CD4-positive, alpha-beta memory T cell (primary cell): ENCODE measurements at regions of chr15 and their contacts with region 1.

Region 1: GRCh38 chr15:70097337-70098169 is at the start of gene TLE3:
- DNase-seq: peak; percentile 98
- H3K4me3 ChIP-seq: peak within 1 kb of the TSS; percentile 52 to 88
- H3K4me3 Mint-ChIP-seq: peak within 1 kb of the TSS; percentile 95 to 100 (median 98)
- H3K27ac ChIP-seq: peak within 1 kb of the TSS; percentile 88
- H3K27ac Mint-ChIP-seq: peak within 1 kb of the TSS; percentile 98 to 100 (median 99)
- H3K4me1 ChIP-seq: peaks cover 54% of the 10 kb centered on the region
- H3K4me1 Mint-ChIP-seq: peaks cover 32 to 70% (median 45%) of the 10 kb centered on the region in 4 donors
- H3K27me3 ChIP-seq: no peaks in the 10 kb centered on the region
- H3K27me3 Mint-ChIP-seq: peaks cover 2 to 9% of the 10 kb centered on the region in 2 donors
- total RNA-seq, gene TLE3: 118 to 121 TPM

Region 2: GRCh38 chr15:69468241-69469121 is 629.1 kb before region 1 on chr15:
- CTCF ChIA-PET with region 1: no interaction called
- POLR2A ChIA-PET with region 1: interaction called, 36 read pairs
- intact Hi-C with region 1: loop called (anchors 1 kb)
- DNase-seq: peak; percentile 90 to 98 (median 94)
- H3K4me3 ChIP-seq: peak overlapping the region in 1 of 2 donors; percentile 34
- H3K4me3 Mint-ChIP-seq: peak overlapping the region; percentile 50 to 87 (median 78)
- H3K27ac ChIP-seq: peak overlapping the region; percentile 90
- H3K27ac Mint-ChIP-seq: peak overlapping the region; percentile 97 to 100 (median 100)
- H3K4me1 ChIP-seq: peaks cover 41% of the 10 kb centered on the region
- H3K4me1 Mint-ChIP-seq: peaks cover 22 to 50% (median 29%) of the 10 kb centered on the region in 4 donors
- H3K27me3 ChIP-seq: no peaks in the 10 kb centered on the region
- H3K27me3 Mint-ChIP-seq: no peaks in the 10 kb centered on the region

Region 3: GRCh38 chr15:69719527-69720240 is 377.9 kb before region 1 on chr15:
- CTCF ChIA-PET with region 1: interaction called, 8 read pairs
- POLR2A ChIA-PET with region 1: interaction called, 144 read pairs
- intact Hi-C with region 1: loop called (anchors 2 kb)
- DNase-seq: peak; percentile 68 to 89 (median 78)
- H3K4me3 ChIP-seq: no peak overlapping the region
- H3K4me3 Mint-ChIP-seq: peak overlapping the region in 7 of 8 donors; percentile 18 to 94 (median 51)
- H3K27ac ChIP-seq: peak overlapping the region; percentile 39
- H3K27ac Mint-ChIP-seq: peak overlapping the region; percentile 93 to 97 (median 95)
- H3K4me1 ChIP-seq: peaks cover 96% of the 10 kb centered on the region
- H3K4me1 Mint-ChIP-seq: peaks cover 62 to 92% (median 81%) of the 10 kb centered on the region in 4 donors
- H3K27me3 ChIP-seq: no peaks in the 10 kb centered on the region
- H3K27me3 Mint-ChIP-seq: peaks cover 0 to 1% of the 10 kb centered on the region in 2 donors

Region 4: GRCh38 chr15:69760890-69761568 is 336.5 kb before region 1 on chr15:
- CTCF ChIA-PET with region 1: interaction called, 26 read pairs
- POLR2A ChIA-PET with region 1: interaction called, 285 read pairs
- intact Hi-C with region 1: loop called (anchors 1 kb)
- DNase-seq: peak; percentile 83 to 94 (median 86)
- H3K4me3 ChIP-seq: no peak overlapping the region
- H3K4me3 Mint-ChIP-seq: peak overlapping the region; percentile 37 to 72 (median 60)
- H3K27ac ChIP-seq: no peak overlapping the region
- H3K27ac Mint-ChIP-seq: peak overlapping the region; percentile 35 to 97 (median 90)
- H3K4me1 ChIP-seq: peaks cover 69% of the 10 kb centered on the region
- H3K4me1 Mint-ChIP-seq: peaks cover 56 to 69% (median 65%) of the 10 kb centered on the region in 4 donors
- H3K27me3 ChIP-seq: no peaks in the 10 kb centered on the region
- H3K27me3 Mint-ChIP-seq: peaks cover 0 to 2% of the 10 kb centered on the region in 2 donors

Region 5: GRCh38 chr15:70299931-70300869 is 202.6 kb after region 1 on chr15:
- CTCF ChIA-PET with region 1: no interaction called
- POLR2A ChIA-PET with region 1: interaction called, 14 read pairs
- intact Hi-C with region 1: no loop called
- DNase-seq: peak; percentile 60 to 88 (median 64)
- H3K4me3 ChIP-seq: no peak overlapping the region
- H3K4me3 Mint-ChIP-seq: peak overlapping the region in 7 of 8 donors; percentile 32 to 70 (median 64)
- H3K27ac ChIP-seq: no peak overlapping the region
- H3K27ac Mint-ChIP-seq: peak overlapping the region; percentile 61 to 90 (median 83)
- H3K4me1 ChIP-seq: peaks cover 32% of the 10 kb centered on the region
- H3K4me1 Mint-ChIP-seq: peaks cover 9 to 19% (median 16%) of the 10 kb centered on the region in 4 donors
- H3K27me3 ChIP-seq: no peaks in the 10 kb centered on the region
- H3K27me3 Mint-ChIP-seq: no peaks in the 10 kb centered on the region